A673 (cell line): ENCODE measurements at regions of chr4 and their contacts with region 1.

Region 1: GRCh38 chr4:40840985-40841571 is 91.3 kb downstream of the NSUN7 start:
- DNase-seq: peak; percentile 91
- H3K4me3 ChIP-seq: no peak overlapping the region
- H3K27ac ChIP-seq: no peak overlapping the region
- H3K4me1 ChIP-seq: no peaks in the 10 kb centered on the region
- H3K27me3 ChIP-seq: no peaks in the 10 kb centered on the region
- CTCF ChIP-seq: peak; percentile 97

Region 2: DNA sequence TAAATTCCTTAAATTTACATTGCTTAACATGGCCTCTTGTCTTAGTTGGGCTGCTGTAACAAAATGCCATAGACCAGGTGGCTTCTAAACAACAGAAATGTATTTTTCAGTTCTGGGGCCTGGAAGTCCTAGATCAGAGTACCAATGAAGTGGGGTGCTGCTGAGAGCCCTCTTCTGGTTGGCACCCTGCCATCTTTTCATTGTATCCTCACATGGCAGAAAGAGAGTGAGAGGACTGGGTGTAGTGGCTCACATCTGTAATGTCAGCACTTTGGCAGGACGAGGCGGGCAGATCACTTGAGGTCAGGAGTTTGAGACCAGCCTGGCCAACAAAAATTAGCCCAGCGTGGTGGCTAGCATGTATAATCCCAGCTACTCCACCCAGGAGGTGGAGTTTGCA is 1446.4 kb before region 1 on chr4:
- CTCF ChIA-PET with region 1: no interaction called
- POLR2A ChIA-PET with region 1: interaction called, 10 read pairs
- intact Hi-C with region 1: no loop called
- DNase-seq: peak; percentile 10
- H3K4me3 ChIP-seq: no peak overlapping the region
- H3K27ac ChIP-seq: no peak overlapping the region
- H3K4me1 ChIP-seq: no peaks in the 10 kb centered on the region
- H3K27me3 ChIP-seq: no peaks in the 10 kb centered on the region
- CTCF ChIP-seq: no peak

Region 3: GRCh38 chr4:40736910-40737309 is 104.2 kb before region 1 on chr4:
- CTCF ChIA-PET with region 1: interaction called, 4 read pairs
- POLR2A ChIA-PET with region 1: no interaction called
- intact Hi-C with region 1: loop called (anchors 5 kb)
- DNase-seq: peak; percentile 53
- H3K4me3 ChIP-seq: no peak overlapping the region
- H3K27ac ChIP-seq: no peak overlapping the region
- H3K4me1 ChIP-seq: peaks cover 1% of the 10 kb centered on the region
- H3K27me3 ChIP-seq: no peaks in the 10 kb centered on the region
- CTCF ChIP-seq: peak; percentile 59

Region 4: GRCh38 chr4:40897557-40898203 is 56.6 kb after region 1 on chr4:
- CTCF ChIA-PET with region 1: interaction called, 15 read pairs
- POLR2A ChIA-PET with region 1: no interaction called
- intact Hi-C with region 1: loop called (anchors 1 kb)
- DNase-seq: peak; percentile 89
- H3K4me3 ChIP-seq: peak overlapping the region; percentile 34
- H3K27ac ChIP-seq: no peak overlapping the region
- H3K4me1 ChIP-seq: no peaks in the 10 kb centered on the region
- H3K27me3 ChIP-seq: no peaks in the 10 kb centered on the region
- CTCF ChIP-seq: peak; percentile 87